Heart left ventricle (tissue), 16 donors: ENCODE measurements at regions of chr7 and their contacts with region 1.

Region 1: DNA sequence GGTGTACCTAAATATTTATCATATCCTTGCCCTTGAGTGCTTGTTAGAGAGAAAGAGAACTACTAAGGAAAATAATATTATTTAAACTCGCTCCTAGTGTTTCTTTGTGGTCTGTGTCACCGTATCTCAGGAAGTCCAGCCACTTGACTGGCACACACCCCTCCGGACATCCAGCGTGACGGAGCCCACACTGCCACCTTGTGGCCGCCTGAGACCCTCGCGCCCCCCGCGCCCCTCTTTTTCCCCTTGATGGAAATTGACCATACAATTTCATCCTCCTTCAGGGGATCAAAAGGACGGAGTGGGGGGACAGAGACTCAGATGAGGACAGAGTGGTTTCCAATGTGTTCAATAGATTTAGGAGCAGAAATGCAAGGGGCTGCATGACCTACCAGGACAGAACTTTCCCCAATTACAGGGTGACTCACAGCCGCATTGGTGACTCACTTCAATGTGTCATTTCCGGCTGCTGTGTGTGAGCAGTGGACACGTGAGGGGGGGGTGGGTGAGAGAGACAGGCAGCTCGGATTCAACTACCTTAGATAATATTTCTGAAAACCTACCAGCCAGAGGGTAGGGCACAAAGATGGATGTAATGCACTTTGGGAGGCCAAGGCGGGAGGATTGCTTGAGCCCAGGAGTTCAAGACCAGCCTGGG is 11.4 kb downstream of the SERPINE1 start:
- DNase-seq: peak in 4 of 5 donors; percentile 66 to 91 (median 82)
- ATAC-seq: peak; percentile 68 to 93 (median 92)
- H3K4me3 ChIP-seq: peak overlapping the region in 3 of 12 donors; percentile 0 to 15 (median 4)
- H3K27ac ChIP-seq: peak overlapping the region in 7 of 12 donors; percentile 41 to 76 (median 55)
- H3K4me1 ChIP-seq: peaks cover 0 to 21% (median 10%) of the 10 kb centered on the region in 12 donors
- H3K27me3 ChIP-seq: no peaks in the 10 kb centered on the region
- CTCF ChIP-seq: peak; percentile 72 to 89 (median 84)
- POLR2A ChIP-seq: no peak

Region 2: GRCh38 chr7:101094416-101095375 is 43.6 kb before region 1 on chr7:
- intact Hi-C with region 1: loop called (anchors 1 to 5 kb)
- DNase-seq: peak in 3 of 5 donors; percentile 42 to 66 (median 43)
- ATAC-seq: peak; percentile 38 to 72 (median 60)
- H3K4me3 ChIP-seq: no peak overlapping the region
- H3K27ac ChIP-seq: peak overlapping the region in 1 of 12 donors; percentile 13
- H3K4me1 ChIP-seq: peaks cover 0 to 23% (median 7%) of the 10 kb centered on the region in 12 donors
- H3K27me3 ChIP-seq: no peaks in the 10 kb centered on the region
- CTCF ChIP-seq: peak; percentile 50 to 76 (median 66)
- POLR2A ChIP-seq: no peak

Region 3: GRCh38 chr7:101099969-101100781 is 38.2 kb before region 1 on chr7:
- intact Hi-C with region 1: loop called (anchors 1 to 5 kb)
- DNase-seq: peak; percentile 86 to 95 (median 92)
- ATAC-seq: peak; percentile 94 to 98 (median 96)
- H3K4me3 ChIP-seq: no peak overlapping the region
- H3K27ac ChIP-seq: peak overlapping the region in 10 of 12 donors; percentile 34 to 80 (median 58)
- H3K4me1 ChIP-seq: peaks cover under 1 to 43% (median 21%) of the 10 kb centered on the region in 12 donors
- H3K27me3 ChIP-seq: no peaks in the 10 kb centered on the region
- CTCF ChIP-seq: peak in 1 of 12 donors; percentile 19
- POLR2A ChIP-seq: peak in 1 of 2 donors; percentile 14

Region 4: DNA sequence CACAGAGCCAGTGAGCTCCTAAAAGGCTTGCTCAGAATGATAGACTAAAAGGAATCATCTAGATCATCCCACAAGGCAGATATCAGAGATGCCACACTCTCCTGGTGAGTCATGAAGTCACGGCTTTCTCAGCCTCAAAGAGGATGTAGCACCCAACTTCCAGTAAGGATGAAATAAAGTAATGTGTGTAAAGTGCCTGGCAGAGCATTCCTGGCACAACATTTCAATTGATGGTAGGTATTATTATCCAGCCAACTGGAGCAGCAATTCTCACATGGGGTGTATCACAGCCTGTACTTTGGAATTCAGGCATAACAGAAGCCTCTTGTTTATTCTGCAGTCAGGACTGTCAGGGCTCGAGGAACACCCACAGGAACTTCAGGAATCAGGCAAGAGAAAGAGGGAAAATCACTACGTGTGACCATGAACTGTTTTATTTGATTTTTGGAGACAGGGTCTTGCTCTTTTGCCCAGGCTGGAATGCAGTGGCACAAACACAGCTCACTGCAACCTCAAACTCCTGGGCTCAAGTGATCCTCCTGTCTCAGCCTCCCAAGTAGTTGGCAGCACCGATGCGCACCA is 47.0 kb after region 1 on chr7:
- intact Hi-C with region 1: loop called in 5 of 10 experiments (anchors 5 to 10 kb)
- DNase-seq: no peak
- ATAC-seq: no peak
- H3K4me3 ChIP-seq: no peak overlapping the region
- H3K27ac ChIP-seq: no peak overlapping the region
- H3K4me1 ChIP-seq: peaks cover 0 to under 1% (median 0%) of the 10 kb centered on the region in 12 donors
- H3K27me3 ChIP-seq: peaks cover under 1 to 52% (median 14%) of the 10 kb centered on the region in 9 donors
- CTCF ChIP-seq: no peak
- POLR2A ChIP-seq: no peak

Region 5: DNA sequence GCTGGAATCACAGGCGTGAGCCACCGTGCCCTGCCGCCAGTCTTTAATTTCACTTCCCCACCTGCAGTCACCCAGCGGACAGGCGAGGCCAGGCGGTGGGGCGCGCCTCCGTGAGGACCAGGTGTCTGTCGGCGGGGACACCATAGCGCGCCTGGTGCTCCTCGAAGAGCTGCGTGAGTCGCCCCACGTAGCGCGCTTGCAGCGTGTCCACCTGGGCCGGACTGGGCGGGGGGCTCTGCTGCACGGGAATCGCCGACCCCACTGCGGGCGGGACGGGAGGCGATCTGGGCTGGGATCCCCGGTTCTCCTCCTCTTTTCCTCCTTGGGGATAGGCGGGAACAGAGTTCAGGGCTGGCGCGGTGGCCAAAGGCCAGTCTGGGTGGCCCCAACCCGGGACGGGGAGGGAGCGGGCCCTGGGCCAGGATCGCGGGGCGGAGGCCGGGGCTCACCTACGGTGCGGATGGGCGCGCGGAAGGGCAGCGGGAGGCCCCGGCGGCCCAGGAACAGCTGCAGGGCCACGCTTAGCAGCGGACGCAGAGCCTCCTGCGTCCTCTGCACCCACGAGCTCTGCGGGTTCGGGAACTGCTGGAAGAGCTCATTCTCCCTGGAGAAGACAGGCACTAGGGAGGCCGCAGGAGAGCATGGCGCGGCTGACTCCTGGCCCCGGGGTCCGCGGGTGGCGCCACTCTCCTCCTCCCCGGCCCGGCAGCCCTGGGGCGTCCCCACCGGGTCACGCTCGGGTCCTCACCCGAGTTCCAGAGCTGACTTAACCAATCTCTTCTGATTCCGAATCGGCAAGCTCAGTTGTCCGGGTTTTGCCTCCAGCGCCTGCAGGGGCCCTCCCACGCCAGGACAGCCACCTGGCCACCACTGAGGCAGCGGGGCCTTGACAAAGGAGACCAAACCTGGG is 63.6 kb after region 1 on chr7:
- intact Hi-C with region 1: loop called in 3 of 10 experiments (anchors 10 kb)
- DNase-seq: no peak
- ATAC-seq: peak in 1 of 4 donors; percentile 40
- H3K4me3 ChIP-seq: peak overlapping the region in 7 of 12 donors; percentile 7 to 28 (median 16)
- H3K27ac ChIP-seq: no peak overlapping the region
- H3K4me1 ChIP-seq: peaks cover 0 to 13% (median 8%) of the 10 kb centered on the region in 12 donors
- H3K27me3 ChIP-seq: peaks cover 16 to 65% (median 34%) of the 10 kb centered on the region in 9 donors
- CTCF ChIP-seq: no peak
- POLR2A ChIP-seq: no peak

Region 6: DNA sequence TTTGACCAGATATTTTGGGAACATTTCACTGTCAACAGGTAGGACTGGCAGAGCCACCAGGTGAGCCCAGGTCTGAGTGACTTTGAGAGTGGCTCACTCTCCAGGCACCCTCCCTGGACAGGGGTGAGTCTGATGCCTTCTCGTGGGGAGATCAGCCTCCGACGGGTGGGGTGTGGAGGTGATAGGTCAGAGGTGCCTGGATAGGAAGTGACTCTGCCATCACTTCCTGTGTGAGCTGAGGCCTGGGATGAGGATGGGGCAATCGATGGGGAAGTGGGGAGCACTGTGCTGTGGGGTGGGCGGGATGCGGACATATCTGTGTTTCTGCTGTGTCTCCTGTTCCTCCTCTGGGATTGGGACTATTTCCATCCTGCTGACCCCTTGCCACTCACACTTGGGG is 148.7 kb after region 1 on chr7:
- intact Hi-C with region 1: loop called in 2 of 10 experiments (anchors 5 kb)
- DNase-seq: peak in 1 of 5 donors; percentile 26
- ATAC-seq: no peak
- H3K4me3 ChIP-seq: no peak overlapping the region
- H3K27ac ChIP-seq: no peak overlapping the region
- H3K4me1 ChIP-seq: peaks cover 0 to 6% (median 0%) of the 10 kb centered on the region in 12 donors
- H3K27me3 ChIP-seq: peaks cover 4 to 28% (median 9%) of the 10 kb centered on the region in 9 donors
- CTCF ChIP-seq: no peak
- POLR2A ChIP-seq: no peak